Panc1 (cell line): ENCODE measurements at regions of chr14 and their contacts with region 1.

Region 1: DNA sequence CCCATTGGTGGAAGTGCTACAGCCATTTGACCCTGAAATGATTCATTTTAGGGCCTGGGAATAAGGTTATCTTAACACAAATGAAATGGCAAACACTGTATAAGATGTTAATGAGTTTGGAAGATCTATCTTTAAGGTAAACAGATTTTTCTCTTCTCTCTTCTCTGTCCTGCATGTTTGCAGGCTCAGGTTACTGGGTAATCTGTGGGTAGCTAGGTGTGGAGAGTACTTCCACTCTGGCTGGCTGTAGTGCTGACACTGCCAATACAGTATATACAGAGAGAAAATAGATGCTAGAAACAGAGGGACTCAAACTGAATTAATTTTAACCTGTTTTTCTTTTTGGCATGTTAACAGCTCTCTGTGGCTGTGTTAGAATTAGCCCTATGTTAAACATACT is 84.6 kb downstream of the SLC38A6 start:
- DNase-seq: no peak
- ATAC-seq: no peak
- H3K4me3 ChIP-seq: no peak overlapping the region
- H3K27ac ChIP-seq: no peak overlapping the region
- H3K4me1 ChIP-seq: no peaks in the 10 kb centered on the region
- H3K27me3 ChIP-seq: no peaks in the 10 kb centered on the region
- CTCF ChIP-seq: no peak

Region 2: GRCh38 chr14:61080591-61081010 is 14.9 kb after region 1 on chr14:
- CTCF ChIA-PET with region 1: no interaction called
- POLR2A ChIA-PET with region 1: interaction called, 13 read pairs
- in situ Hi-C with region 1: no loop called
- intact Hi-C with region 1: no loop called
- DNase-seq: no peak
- ATAC-seq: no peak
- H3K4me3 ChIP-seq: no peak overlapping the region
- H3K27ac ChIP-seq: no peak overlapping the region
- H3K4me1 ChIP-seq: no peaks in the 10 kb centered on the region
- H3K27me3 ChIP-seq: no peaks in the 10 kb centered on the region
- CTCF ChIP-seq: no peak

Region 3: DNA sequence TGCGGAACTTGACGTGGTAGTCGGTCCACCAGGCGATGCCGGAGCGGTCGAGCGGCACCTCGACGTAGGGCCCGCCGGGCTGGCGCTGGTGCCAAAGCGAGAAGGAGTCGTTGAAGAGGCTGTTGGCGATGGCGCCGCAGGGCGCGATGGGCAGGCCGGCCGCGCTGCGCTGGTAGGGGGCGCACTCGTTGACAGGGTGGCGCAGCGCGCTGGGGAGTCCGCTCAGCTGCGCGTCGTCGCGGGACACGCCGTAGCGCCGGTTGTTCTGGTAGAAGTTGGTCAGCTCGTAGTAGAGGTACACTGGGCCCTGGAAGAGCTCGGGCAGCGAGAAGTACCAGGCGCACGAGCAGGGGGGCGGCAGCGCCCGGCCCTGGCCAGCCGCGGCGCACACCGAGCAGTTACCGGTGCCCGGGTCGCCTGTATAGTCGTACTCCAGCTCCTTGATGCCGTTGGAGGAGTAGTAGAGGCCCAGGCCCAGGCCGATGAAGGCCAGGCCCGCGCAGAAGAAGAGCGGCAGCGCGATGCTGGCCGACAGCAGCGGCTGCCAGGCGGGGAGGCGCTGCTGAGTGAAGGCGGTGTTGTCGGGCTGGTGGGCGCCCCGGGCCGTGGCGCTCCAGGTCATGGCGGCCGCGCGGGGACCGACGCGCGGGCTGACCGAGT is 215.0 kb after region 1 on chr14:
- CTCF ChIA-PET with region 1: no interaction called
- POLR2A ChIA-PET with region 1: no interaction called
- in situ Hi-C with region 1: no loop called
- intact Hi-C with region 1: no loop called
- DNase-seq: no peak
- ATAC-seq: peak; percentile 88
- H3K4me3 ChIP-seq: peak overlapping the region; percentile 33 to 48
- H3K27ac ChIP-seq: no peak overlapping the region
- H3K4me1 ChIP-seq: no peaks in the 10 kb centered on the region
- H3K27me3 ChIP-seq: peaks cover 26% of the 10 kb centered on the region
- CTCF ChIP-seq: peak; percentile 72